WTC11 (cell line): ENCODE measurements at regions of chr1 and their contacts with region 1.

Region 1: DNA sequence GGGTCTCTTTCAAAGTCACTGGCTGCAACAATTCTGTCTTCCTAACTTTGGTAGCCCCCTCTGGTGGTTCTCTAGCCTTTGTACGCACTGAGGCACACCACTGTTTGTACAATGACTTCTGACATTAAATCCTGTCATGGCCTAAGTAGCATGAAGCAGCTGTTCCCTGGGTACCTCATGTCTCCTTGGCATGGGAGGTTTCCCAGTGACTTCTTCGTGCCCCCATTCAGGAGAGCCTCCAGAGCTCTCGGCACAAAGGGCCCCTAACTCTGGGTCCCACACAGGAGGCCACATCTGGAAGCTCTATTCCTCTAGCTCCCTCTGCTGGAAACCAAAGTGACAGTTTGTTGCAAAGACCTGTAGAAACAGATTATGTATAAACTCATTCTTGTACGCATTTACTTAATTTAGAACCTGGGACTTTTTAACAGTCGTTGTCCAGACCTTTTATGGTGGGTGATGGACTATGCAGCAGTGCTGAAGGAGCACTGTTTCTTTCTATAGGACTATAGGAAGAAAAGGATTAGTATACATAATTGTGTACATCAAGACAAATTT is 13.4 kb downstream of the SWT1 start:
- DNase-seq: peak; percentile 48
- ATAC-seq: peak; percentile 94
- H3K4me3 Mint-ChIP-seq: peak overlapping the region; percentile 42
- H3K27ac Mint-ChIP-seq: no peak overlapping the region
- H3K4me1 Mint-ChIP-seq: no peaks in the 10 kb centered on the region
- H3K27me3 Mint-ChIP-seq: no peaks in the 10 kb centered on the region
- CTCF ChIP-seq: 0 out of 2 replicates have a peak, but pooled peaks have one; percentile 23

Region 2: GRCh38 chr1:184973272-184974055 is 196.9 kb before region 1 on chr1:
- CTCF ChIA-PET with region 1: interaction called, 11 read pairs
- POLR2A ChIA-PET with region 1: no interaction called
- DNase-seq: peak; percentile 55
- ATAC-seq: peak; percentile 82
- H3K4me3 Mint-ChIP-seq: peak overlapping the region; percentile 91
- H3K27ac Mint-ChIP-seq: no peak overlapping the region
- H3K4me1 Mint-ChIP-seq: peaks cover 8% of the 10 kb centered on the region
- H3K27me3 Mint-ChIP-seq: peaks cover 59% of the 10 kb centered on the region
- CTCF ChIP-seq: no peak

Region 3: GRCh38 chr1:184982002-184982954 is 188.1 kb before region 1 on chr1:
- CTCF ChIA-PET with region 1: interaction called, 16 read pairs
- POLR2A ChIA-PET with region 1: no interaction called
- DNase-seq: peak; percentile 76
- ATAC-seq: peak; percentile 97
- H3K4me3 Mint-ChIP-seq: no peak overlapping the region
- H3K27ac Mint-ChIP-seq: no peak overlapping the region
- H3K4me1 Mint-ChIP-seq: 0 out of 2 replicates have a peak, but pooled peaks cover 5% of the 10 kb centered on the region
- H3K27me3 Mint-ChIP-seq: peaks cover under 1% of the 10 kb centered on the region
- CTCF ChIP-seq: peak; percentile 62

Region 4: DNA sequence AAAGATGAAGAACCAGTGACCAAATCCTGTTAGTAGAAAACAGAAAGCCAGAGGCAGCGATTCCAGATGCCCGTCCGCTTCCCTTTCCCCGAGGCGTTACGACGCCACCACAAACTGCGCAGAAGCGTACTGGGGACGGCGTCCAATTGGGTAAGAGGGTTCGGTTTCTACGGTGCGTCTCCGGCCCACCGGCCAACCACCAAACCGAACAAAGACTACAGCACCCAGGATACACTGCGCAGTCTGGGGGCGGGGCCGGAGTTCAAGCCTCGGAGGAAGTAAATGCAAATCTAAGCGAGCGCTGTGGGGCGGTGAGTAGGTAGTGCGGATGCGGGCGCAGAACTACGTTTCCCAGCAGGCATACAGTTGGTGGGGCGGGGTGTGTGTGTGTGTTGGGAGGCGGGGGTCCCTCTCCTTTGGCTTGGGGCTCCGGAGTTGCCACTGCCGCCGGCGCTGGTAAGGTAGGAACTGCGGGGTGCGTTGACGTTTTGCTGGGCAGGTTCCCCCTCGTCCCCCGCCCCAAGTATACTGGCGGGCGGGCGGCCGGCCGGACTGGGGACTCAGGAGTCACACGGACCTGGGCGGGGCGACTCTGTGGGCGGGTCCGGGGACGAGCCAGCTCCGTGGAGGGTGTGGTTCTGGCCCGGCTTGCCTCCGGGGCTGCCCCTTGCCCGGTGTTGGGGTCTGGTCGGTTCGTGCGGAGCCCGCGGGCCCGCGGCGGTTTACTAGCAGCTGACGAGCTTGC is 13.3 kb before region 1 on chr1 and contains the starts of genes SWT1 and TRMT1L:
- CTCF ChIA-PET with region 1: interaction called, 20 read pairs
- POLR2A ChIA-PET with region 1: interaction called, 7 read pairs
- DNase-seq: peak; percentile 99
- ATAC-seq: peak; percentile 95
- H3K4me3 Mint-ChIP-seq: peak within 1 kb of the TSS; percentile 98
- H3K27ac Mint-ChIP-seq: peak within 1 kb of the TSS; percentile 94
- H3K4me1 Mint-ChIP-seq: peaks cover 16% of the 10 kb centered on the region
- H3K27me3 Mint-ChIP-seq: peaks cover 3% of the 10 kb centered on the region; the same call in 1 of the 2 replicates
- CTCF ChIP-seq: no peak
- total RNA-seq, gene SWT1: 5.4 to 5.8 TPM (median 5.5 TPM) in 3 replicates
- total RNA-seq, gene TRMT1L: 24.7 to 28.1 TPM (median 27.3 TPM) in 3 replicates